Activated CD4-positive, alpha-beta memory T cell treated with anti-CD3 and anti-CD28 coated beads, Interleukin-2, amount 10 ng/mL, durations not matched to agents 7 days and 5 days (primary cell): ENCODE measurements at regions of chr19 and their contacts with region 1.

Region 1: GRCh38 chr19:23395041-23395721 is at the start of gene ZNF91:
- DNase-seq: peak; percentile 94
- H3K4me3 Mint-ChIP-seq: peak within 1 kb of the TSS; percentile 96
- H3K27ac Mint-ChIP-seq: peak within 1 kb of the TSS; percentile 98
- H3K4me1 Mint-ChIP-seq: peaks cover 12% of the 10 kb centered on the region
- H3K27me3 Mint-ChIP-seq: no peaks in the 10 kb centered on the region
- total RNA-seq, gene ZNF91: 43.5 to 46.2 TPM

Region 2: DNA sequence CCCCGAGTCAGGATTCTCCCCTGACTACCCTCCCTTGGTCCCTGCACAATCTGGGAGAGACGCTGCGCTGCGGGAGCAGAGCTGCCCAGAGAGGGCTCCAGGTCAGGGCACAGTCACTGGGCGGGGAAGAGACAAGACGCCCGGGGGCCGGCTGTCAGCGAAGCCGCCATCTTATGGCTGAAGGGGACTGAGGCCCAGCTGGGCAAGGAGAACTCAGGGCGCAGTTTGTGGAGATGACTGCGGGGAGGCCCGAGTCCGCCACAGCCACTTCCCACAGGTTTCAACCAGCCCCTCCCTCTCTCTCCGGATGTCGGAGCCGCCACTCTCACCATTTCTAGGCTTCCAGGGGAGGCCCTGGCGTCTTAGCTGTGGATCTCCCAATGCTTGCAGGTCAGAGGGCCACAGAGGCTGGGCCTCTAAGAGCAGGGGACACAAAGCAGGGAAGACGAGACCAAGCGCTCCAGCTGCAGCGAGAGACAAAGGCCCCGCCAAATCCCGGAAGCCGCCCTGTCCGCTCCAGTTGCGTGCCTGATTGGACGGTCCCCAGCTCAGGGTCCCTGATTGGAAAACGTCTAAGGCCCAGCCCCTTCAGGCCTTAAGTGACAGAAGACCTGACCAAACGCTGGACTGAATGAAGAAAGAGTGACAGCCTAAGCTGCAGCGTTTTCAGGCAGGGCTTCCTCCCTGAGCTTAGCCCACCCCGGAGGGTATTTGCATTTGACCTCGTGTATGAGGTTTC is 145.1 kb before region 1 on chr19 and contains the start of gene ZNF724:
- CTCF ChIA-PET with region 1: no interaction called
- POLR2A ChIA-PET with region 1: interaction called, 12 read pairs
- DNase-seq: peak; percentile 92
- H3K4me3 Mint-ChIP-seq: peak within 1 kb of the TSS; percentile 96
- H3K27ac Mint-ChIP-seq: peak within 1 kb of the TSS; percentile 97
- H3K4me1 Mint-ChIP-seq: peaks cover 16% of the 10 kb centered on the region
- H3K27me3 Mint-ChIP-seq: no peaks in the 10 kb centered on the region
- total RNA-seq, gene ZNF724: 10.5 to 10.9 TPM

Region 3: DNA sequence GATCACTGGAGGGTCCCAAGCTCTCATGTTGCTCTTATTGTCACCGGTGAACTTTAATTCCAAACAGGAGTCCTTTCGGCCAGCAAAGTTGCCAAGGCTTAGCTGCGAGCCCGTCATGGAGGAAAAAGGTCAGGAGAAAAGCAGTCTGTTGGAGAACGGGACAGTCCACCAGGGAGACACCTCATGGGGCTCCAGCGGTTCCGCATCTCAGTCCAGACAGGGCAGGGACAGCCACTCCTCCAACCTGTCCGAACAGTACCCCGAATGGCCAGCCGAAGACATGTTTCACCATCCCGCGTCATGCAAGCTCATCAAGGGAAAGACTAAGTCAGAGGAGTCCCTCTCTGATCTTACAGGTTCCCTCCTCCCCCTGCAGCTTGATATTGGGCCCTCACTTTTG is 10.3 kb before region 1 on chr19:
- CTCF ChIA-PET with region 1: no interaction called
- POLR2A ChIA-PET with region 1: interaction called, 12 read pairs
- DNase-seq: no peak
- H3K4me3 Mint-ChIP-seq: no peak overlapping the region
- H3K27ac Mint-ChIP-seq: no peak overlapping the region
- H3K4me1 Mint-ChIP-seq: peaks cover 1% of the 10 kb centered on the region
- H3K27me3 Mint-ChIP-seq: no peaks in the 10 kb centered on the region

Region 4: GRCh38 chr19:23409392-23410048 is 14.3 kb after region 1 on chr19:
- CTCF ChIA-PET with region 1: no interaction called
- POLR2A ChIA-PET with region 1: no interaction called
- DNase-seq: no peak
- H3K4me3 Mint-ChIP-seq: no peak overlapping the region
- H3K27ac Mint-ChIP-seq: no peak overlapping the region
- H3K4me1 Mint-ChIP-seq: no peaks in the 10 kb centered on the region
- H3K27me3 Mint-ChIP-seq: no peaks in the 10 kb centered on the region

Region 5: GRCh38 chr19:23758187-23759074 is 363.2 kb after region 1 on chr19 and contains the start of gene ZNF681:
- CTCF ChIA-PET with region 1: interaction called, 3 read pairs
- POLR2A ChIA-PET with region 1: interaction called, 29 read pairs
- DNase-seq: peak; percentile 89
- H3K4me3 Mint-ChIP-seq: peak within 1 kb of the TSS; percentile 89
- H3K27ac Mint-ChIP-seq: peak within 1 kb of the TSS; percentile 90
- H3K4me1 Mint-ChIP-seq: peaks cover 24% of the 10 kb centered on the region
- H3K27me3 Mint-ChIP-seq: no peaks in the 10 kb centered on the region
- total RNA-seq, gene ZNF681: 3.7 to 5.9 TPM

Region 6: DNA sequence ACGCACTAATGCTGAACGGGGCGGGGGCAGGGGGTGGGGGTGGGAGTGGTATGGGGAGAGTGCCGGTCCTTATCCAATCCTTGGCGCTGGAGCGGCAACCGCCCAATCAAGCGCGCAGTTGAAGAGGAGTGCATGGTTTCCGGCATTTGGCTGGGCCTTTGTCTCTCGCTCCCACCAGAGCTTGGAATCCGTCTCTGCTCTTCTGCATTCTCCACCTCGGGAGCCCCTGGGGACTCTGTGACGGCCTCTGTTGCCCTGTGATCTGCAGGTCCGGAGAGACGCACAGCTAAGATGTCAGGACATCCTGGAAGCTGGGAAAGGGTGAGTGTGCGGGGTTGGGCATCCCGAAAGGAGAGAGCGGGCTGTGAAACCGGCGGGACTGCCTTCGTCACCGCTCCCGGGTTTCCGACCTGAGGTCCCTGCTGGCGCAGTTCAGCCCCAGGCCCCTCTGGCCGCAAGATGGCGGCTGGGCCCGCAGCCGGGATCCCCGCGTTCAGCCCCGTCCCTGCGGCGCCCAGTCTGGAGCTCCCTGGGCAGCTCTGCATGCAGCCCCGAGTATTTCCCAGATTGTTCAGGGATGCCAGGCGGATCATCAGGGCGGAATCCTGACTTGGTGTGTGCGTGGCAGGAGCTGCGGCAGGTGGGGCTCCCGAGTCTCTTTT is 638.3 kb after region 1 on chr19:
- CTCF ChIA-PET with region 1: no interaction called
- POLR2A ChIA-PET with region 1: interaction called, 11 read pairs
- DNase-seq: peak; percentile 87
- H3K4me3 Mint-ChIP-seq: peak overlapping the region; percentile 99
- H3K27ac Mint-ChIP-seq: peak overlapping the region; percentile 97
- H3K4me1 Mint-ChIP-seq: peaks cover 25% of the 10 kb centered on the region
- H3K27me3 Mint-ChIP-seq: no peaks in the 10 kb centered on the region